Sigmoid colon (tissue), 7 donors: ENCODE measurements at regions of chr19 and their contacts with region 1.

Region 1: GRCh38 chr19:6048808-6049405 is 61.4 kb downstream of the RFX2 start:
- DNase-seq: peak; percentile 89
- H3K4me3 ChIP-seq: peak overlapping the region in 2 of 4 donors; percentile 15 to 25
- H3K27ac ChIP-seq: peak overlapping the region; percentile 48 to 69 (median 63)
- H3K4me1 ChIP-seq: peaks cover 0 to 36% (median 25%) of the 10 kb centered on the region in 4 donors
- H3K27me3 ChIP-seq: no peaks in the 10 kb centered on the region
- CTCF ChIP-seq: peak in 3 of 4 experiments; percentile 75 to 95 (median 88)
- EP300 ChIP-seq: no peak
- POLR2A ChIP-seq: no peak

Region 2: DNA sequence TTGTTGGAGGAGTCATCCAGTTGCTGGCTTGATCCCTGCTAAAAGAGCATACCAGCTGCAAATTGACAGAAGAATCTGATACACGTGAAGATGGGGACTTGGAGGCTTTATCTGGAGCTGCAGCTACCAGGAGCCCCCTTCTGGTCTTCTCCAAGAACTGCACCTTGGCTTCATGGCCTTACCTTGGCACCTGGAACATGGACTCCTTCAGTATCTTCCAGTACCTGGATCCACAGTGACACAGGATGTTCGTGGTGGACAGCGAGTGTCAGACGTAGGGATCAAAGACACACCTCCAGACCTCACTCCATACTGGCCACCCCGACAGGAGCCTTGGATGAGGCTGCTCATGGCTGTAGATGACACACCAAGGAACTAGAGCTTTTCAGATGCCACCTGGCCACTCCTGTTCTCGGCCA is 76.7 kb after region 1 on chr19:
- intact Hi-C with region 1: loop called (anchors 1 kb)
- DNase-seq: peak; percentile 81
- H3K4me3 ChIP-seq: no peak overlapping the region
- H3K27ac ChIP-seq: no peak overlapping the region
- H3K4me1 ChIP-seq: no peaks in the 10 kb centered on the region
- H3K27me3 ChIP-seq: no peaks in the 10 kb centered on the region
- CTCF ChIP-seq: peak; percentile 84 to 96 (median 95)
- EP300 ChIP-seq: no peak
- POLR2A ChIP-seq: no peak

Region 3: DNA sequence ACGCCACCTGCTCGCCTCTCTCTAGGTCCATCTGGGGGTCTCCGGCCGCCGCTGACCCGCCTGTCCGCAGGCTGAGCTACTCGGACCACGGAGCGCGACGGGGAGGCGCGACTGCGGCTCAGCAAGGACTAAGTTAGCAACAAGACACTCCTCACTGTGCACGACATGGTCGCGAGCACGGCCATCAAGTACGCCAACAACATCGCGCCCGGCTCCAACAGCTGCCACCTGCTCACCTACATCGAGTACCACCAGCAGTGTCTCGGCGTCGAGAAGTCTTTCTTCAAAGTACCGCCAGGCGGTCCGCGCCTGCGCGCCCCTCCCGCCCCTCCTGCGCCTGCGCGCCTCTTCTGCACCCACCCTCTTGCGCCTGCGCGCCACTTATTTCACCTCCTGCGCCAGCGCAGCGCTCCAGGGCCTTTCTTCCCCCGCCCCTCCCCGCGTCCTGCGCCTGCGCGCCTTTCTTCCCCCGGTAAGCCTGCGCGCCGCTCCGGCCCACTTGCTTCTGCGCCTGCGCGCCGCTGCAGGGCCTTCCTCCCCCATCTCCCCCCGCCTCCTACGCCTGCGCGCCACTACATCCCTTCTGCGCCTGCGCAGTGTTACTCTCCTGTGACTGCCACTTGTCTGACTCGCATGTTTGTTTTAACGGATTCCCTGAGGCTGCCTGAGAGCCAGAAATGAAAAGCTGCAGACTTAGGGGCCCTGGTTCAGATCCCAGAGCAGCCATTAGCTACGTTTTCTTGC is 150.5 kb after region 1 on chr19:
- intact Hi-C with region 1: loop called (anchors 10 kb)
- DNase-seq: peak; percentile 99
- H3K4me3 ChIP-seq: peak overlapping the region; percentile 44 to 69 (median 59)
- H3K27ac ChIP-seq: peak overlapping the region; percentile 72 to 78 (median 76)
- H3K4me1 ChIP-seq: peaks cover 0 to 20% (median 14%) of the 10 kb centered on the region in 4 donors
- H3K27me3 ChIP-seq: no peaks in the 10 kb centered on the region
- CTCF ChIP-seq: peak; percentile 44 to 59 (median 56)
- EP300 ChIP-seq: no peak
- POLR2A ChIP-seq: no peak

Region 4: DNA sequence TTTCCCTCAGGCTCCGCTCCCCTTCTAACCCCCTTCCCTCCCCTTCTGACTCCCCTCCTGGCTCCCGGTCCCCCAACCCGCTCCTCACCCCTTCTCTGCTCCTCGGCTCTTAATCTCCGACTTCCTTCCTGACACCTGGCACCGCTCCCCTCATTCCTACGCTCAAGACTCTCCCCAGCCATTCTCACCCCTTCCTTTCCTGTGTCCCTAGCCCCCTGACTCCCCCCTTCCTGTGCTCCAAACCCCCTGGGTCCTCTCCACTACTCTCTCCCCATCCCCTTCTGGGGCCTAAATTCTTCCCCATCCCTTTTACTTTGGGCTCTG is 313.1 kb after region 1 on chr19:
- intact Hi-C with region 1: no loop called
- DNase-seq: peak; percentile 70
- H3K4me3 ChIP-seq: peak overlapping the region; percentile 87 to 94 (median 91)
- H3K27ac ChIP-seq: peak overlapping the region; percentile 89 to 92 (median 90)
- H3K4me1 ChIP-seq: peaks cover 0 to 15% (median 13%) of the 10 kb centered on the region in 4 donors
- H3K27me3 ChIP-seq: no peaks in the 10 kb centered on the region
- CTCF ChIP-seq: no peak
- EP300 ChIP-seq: no peak
- POLR2A ChIP-seq: no peak

Region 5: DNA sequence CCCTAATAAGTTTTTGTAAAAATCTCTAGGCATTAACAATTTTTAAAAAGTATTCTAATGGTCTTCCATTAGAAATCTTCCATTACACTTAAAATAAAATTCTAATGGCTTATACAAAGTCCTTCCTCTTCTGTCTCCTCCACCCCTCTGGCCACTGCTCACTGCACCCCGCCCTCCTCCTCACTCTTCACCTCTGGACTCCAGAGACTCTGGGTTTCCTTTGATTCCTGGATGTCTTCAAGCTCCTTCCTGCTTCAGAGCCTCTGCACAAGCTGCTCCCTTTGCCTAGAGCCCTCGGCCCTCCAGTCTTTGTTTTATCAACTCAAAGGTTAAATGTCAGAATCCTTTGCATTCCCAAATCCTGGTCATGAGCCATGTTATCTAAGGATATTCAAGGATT is 600.3 kb after region 1 on chr19:
- intact Hi-C with region 1: no loop called
- DNase-seq: no peak
- H3K4me3 ChIP-seq: no peak overlapping the region
- H3K27ac ChIP-seq: no peak overlapping the region
- H3K4me1 ChIP-seq: no peaks in the 10 kb centered on the region
- H3K27me3 ChIP-seq: peaks cover 0 to 14% (median 0%) of the 10 kb centered on the region in 3 donors
- CTCF ChIP-seq: no peak
- EP300 ChIP-seq: no peak
- POLR2A ChIP-seq: no peak